ENCODE measurements at regions of chr2 and their contacts with region 1.

Region 1: DNA sequence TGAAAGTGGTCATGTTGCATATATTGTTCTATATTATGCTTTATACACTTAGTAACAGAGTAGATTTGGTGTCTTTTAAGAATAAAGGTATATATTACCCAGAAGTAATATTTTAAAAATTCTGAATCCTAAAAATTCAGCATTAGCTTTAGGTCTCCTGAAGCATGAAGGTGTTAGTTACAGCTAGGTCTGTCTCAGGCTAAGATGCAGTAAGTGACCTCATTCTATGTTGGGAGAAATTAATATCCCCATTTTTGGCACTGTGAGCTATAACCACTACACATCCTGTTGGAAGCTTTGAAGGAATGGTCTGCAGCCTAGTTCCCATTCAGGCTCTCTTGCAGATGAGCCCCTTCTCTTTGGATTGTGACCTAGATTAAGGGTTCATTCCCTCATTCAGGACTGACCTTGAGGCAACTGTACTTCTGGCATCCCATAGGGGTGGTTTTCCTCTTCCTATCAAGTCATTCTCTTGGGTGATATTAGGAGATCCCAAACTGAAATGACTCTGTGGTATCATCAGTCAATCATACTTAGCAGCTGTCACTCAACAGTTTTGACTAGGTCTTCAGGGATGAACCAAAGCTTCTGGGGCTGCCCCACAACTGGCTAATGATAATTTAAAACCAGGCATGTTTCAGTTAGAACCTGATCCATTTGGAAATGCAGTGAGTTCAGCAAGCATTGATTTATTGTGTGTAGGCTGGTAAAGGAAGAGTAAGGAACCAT is 117.7 kb downstream of the GPD2 start:
- DNase-seq: no peak
- ATAC-seq: no peak
- H3K4me3 ChIP-seq: no peak overlapping the region
- H3K27ac ChIP-seq: no peak overlapping the region
- H3K4me1 ChIP-seq: no peaks in the 10 kb centered on the region
- H3K27me3 ChIP-seq: no peaks in the 10 kb centered on the region
- CTCF ChIP-seq: no peak

Region 2: GRCh38 chr2:156505696-156506095 is 48.2 kb before region 1 on chr2:
- CTCF ChIA-PET with region 1: no interaction called
- POLR2A ChIA-PET with region 1: interaction called, 13 read pairs
- in situ Hi-C with region 1: no loop called
- intact Hi-C with region 1: no loop called
- DNase-seq: no peak
- ATAC-seq: no peak
- H3K4me3 ChIP-seq: no peak overlapping the region
- H3K27ac ChIP-seq: no peak overlapping the region
- H3K4me1 ChIP-seq: no peaks in the 10 kb centered on the region
- H3K27me3 ChIP-seq: no peaks in the 10 kb centered on the region
- CTCF ChIP-seq: no peak

Measured in Panc1 (cell line).